G401 (cell line): ENCODE measurements at regions of chr16 and their contacts with region 1.

Region 1: GRCh38 chr16:1959269-1960049 is at the start of gene NDUFB10:
- DNase-seq: peak; percentile 79
- total RNA-seq, gene NDUFB10: 339 and 361 TPM in 2 replicates

Region 2: DNA sequence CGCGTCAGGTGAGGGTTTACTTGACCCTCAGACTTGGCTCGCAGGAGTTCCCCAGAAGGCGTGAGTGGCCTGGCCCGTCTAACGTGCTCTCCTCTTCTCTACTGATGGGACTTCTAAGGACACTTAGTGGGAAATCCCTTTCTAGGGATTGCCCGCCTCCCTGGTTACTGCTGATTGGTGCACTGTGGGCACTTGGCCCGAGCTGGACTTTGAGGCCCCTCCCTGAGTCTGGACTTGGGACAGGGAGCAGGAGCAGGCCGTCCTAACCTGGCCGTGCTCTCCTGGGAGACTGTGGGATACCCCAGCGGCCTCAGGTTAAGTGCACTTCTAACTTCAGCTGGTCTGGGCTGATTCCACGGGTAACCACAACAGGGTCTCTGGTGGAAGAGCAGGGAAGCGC is 362.3 kb before region 1 on chr16:
- in situ Hi-C with region 1: no loop called
- DNase-seq: no peak

Region 3: DNA sequence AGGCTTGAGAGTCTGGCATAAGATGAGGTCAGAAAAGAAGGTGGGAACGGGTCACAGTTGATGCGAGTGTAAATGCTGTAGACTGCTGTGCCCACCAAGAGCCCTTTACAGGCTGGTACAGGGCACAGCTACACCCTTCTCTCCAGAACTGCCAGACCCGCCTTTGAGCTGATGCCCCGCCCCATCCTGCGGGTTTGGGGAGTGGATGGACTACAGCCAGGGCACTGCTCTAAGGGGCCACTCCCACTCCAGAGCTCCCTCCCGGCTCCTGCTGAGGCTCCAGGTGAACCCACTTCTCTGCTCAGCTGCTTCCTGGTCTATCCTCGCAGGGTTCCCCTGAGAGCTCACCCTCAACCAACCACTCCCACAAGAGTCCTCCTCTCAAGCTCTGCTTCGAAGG is 99.8 kb before region 1 on chr16:
- in situ Hi-C with region 1: loop called (anchors 10 kb)
- DNase-seq: no peak